Activated T-helper 1 cell treated with anti-CD3 and anti-CD28 coated beads, Interleukin-12 subunit alpha, Interleukin-12 subunit beta, Interleukin-2, Interleukin-4 antibody, amounts not matched to agents 30 ng/mL and 10 ng/mL and 1 ng/mL, durations not matched to agents 14 hours and 24 hours and 36 hours (primary cell): ENCODE measurements at regions of chr12 and their contacts with region 1.

Region 1: GRCh38 chr12:110826592-110827200 is 20.1 kb upstream of the CCDC63 start:
- DNase-seq: peak; percentile 79
- H3K4me3 Mint-ChIP-seq: peak overlapping the region; percentile 40
- H3K27ac Mint-ChIP-seq: peak overlapping the region; percentile 78
- H3K4me1 Mint-ChIP-seq: peaks cover 12% of the 10 kb centered on the region
- H3K27me3 Mint-ChIP-seq: peaks cover 8% of the 10 kb centered on the region

Region 2: GRCh38 chr12:110224379-110225304 is 602.1 kb before region 1 on chr12:
- intact Hi-C with region 1: no loop called
- DNase-seq: no peak
- H3K4me3 Mint-ChIP-seq: no peak overlapping the region
- H3K27ac Mint-ChIP-seq: no peak overlapping the region
- H3K4me1 Mint-ChIP-seq: no peaks in the 10 kb centered on the region
- H3K27me3 Mint-ChIP-seq: peaks cover 7% of the 10 kb centered on the region

Region 3: GRCh38 chr12:110508071-110508586 is 318.6 kb before region 1 on chr12:
- intact Hi-C with region 1: loop called (anchors 1 kb)
- DNase-seq: no peak
- H3K4me3 Mint-ChIP-seq: no peak overlapping the region
- H3K27ac Mint-ChIP-seq: no peak overlapping the region
- H3K4me1 Mint-ChIP-seq: no peaks in the 10 kb centered on the region
- H3K27me3 Mint-ChIP-seq: peaks cover 15% of the 10 kb centered on the region

Region 4: DNA sequence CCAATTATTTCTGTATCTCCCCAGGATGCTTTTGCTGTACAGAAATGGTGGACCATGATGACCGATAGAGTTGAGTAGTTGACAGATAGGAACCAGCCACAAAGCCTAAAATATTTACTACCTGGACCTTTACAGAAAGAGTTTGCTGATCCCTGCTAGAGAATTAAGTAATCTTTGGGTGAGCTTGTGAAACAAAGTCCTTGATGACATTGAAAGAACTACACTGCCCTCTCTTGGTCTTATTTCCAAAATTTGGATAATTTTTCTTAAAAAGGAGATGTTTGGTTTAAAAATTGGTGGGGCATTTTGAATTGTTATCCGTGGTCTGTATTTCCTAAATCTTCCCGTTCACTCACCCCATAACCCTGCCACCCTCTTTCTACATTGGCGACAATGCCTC is 226.4 kb before region 1 on chr12:
- intact Hi-C with region 1: loop called (anchors 2 kb)
- DNase-seq: no peak
- H3K4me3 Mint-ChIP-seq: no peak overlapping the region
- H3K27ac Mint-ChIP-seq: no peak overlapping the region
- H3K4me1 Mint-ChIP-seq: peaks cover 12% of the 10 kb centered on the region
- H3K27me3 Mint-ChIP-seq: no peaks in the 10 kb centered on the region

Region 5: GRCh38 chr12:110698171-110698902 is 128.4 kb before region 1 on chr12:
- intact Hi-C with region 1: loop called (anchors 1 kb)
- DNase-seq: peak; percentile 78
- H3K4me3 Mint-ChIP-seq: no peak overlapping the region
- H3K27ac Mint-ChIP-seq: peak overlapping the region; percentile 85
- H3K4me1 Mint-ChIP-seq: peaks cover 19% of the 10 kb centered on the region
- H3K27me3 Mint-ChIP-seq: peaks cover 2% of the 10 kb centered on the region

Region 6: DNA sequence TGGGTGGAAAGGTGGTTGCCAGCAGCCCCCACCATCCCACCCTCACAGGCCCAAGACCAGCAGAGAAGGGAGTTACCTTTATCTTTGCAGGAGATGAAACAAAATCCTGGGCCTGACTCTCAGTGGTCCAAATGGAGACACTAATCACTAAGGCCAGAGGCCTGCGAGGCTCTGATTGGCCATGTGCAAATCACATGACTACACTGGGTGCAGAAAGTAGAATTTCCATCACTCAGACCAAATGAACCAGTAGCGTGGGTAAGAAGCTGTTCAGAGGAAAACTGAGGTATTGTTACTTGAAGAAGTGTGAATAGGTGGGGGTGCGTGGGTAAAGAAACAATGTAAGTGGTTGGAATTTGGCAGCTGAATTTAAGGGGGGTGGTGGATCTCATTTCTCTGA is 63.8 kb before region 1 on chr12:
- intact Hi-C with region 1: loop called (anchors 1 kb)
- DNase-seq: no peak
- H3K4me3 Mint-ChIP-seq: peak overlapping the region; percentile 69
- H3K27ac Mint-ChIP-seq: peak overlapping the region; percentile 90
- H3K4me1 Mint-ChIP-seq: peaks cover 27% of the 10 kb centered on the region
- H3K27me3 Mint-ChIP-seq: peaks cover 5% of the 10 kb centered on the region

Region 7: GRCh38 chr12:110888256-110888991 is 61.7 kb after region 1 on chr12:
- intact Hi-C with region 1: loop called (anchors 1 kb)
- DNase-seq: no peak
- H3K4me3 Mint-ChIP-seq: no peak overlapping the region
- H3K27ac Mint-ChIP-seq: no peak overlapping the region
- H3K4me1 Mint-ChIP-seq: peaks cover 5% of the 10 kb centered on the region
- H3K27me3 Mint-ChIP-seq: peaks cover 6% of the 10 kb centered on the region